ENCODE measurements at regions of chr1 and their contacts with region 1.

Region 1: DNA sequence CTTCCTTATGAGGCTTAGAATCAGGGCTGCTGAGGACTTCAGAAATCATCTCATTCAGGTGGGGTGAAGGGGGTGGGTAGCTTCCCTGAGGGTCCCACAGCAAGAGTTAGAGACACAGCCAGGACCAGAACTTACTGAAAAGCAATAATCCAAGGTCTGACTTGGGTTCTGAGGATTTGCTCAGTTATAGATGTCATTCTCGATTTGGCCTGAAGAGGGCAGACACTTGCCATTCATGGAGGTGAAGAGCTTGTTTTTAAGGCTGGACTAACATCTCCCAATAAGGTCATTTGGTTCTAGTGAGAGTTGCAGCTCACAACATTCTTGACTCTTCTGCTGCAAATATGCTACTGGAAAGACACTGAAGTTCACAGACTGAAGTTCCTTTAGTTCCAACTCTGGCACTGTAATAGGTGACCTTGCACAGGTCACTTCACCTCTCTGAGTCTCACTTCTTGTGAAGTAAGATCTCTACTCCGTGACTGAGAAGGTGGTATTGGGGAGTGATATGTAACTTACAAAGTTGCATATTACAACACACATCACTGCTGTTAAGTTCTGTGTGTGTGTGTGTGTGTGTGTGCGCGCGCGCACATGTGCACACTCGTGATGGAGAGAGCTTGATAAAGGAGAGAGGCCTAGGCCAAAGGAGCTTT is 69.8 kb upstream of the DIRAS3 start:
- DNase-seq: peak; percentile 74
- H3K4me3 ChIP-seq: no peak overlapping the region
- H3K27ac ChIP-seq: no peak overlapping the region
- H3K27me3 ChIP-seq: no peaks in the 10 kb centered on the region
- CTCF ChIP-seq: peak; percentile 85

Region 2: GRCh38 chr1:67766141-67766978 is 353.9 kb before region 1 on chr1:
- CTCF ChIA-PET with region 1: interaction called, 19 read pairs
- POLR2A ChIA-PET with region 1: no interaction called
- DNase-seq: peak; percentile 73
- H3K4me3 ChIP-seq: peak overlapping the region; percentile 37
- H3K27ac ChIP-seq: peak overlapping the region; percentile 87
- H3K27me3 ChIP-seq: no peaks in the 10 kb centered on the region
- CTCF ChIP-seq: peak; percentile 76

Region 3: DNA sequence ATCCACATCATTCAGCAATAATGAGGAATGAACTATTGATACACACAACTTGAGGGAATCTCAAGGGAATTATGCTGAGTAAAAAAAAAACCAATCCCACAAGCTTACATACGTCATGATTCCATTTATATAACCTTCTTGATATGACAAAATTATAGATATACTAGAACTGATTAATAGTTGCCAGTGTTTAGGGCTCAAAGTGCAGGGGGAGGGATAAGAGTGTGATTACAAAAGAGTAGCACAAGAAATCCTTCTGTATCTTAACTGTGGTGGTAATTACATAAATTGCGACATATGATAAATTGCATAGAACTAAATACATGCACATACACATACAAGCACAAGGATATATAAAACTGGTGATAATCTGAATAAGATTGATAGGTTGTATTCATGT is 83.3 kb before region 1 on chr1:
- CTCF ChIA-PET with region 1: no interaction called
- POLR2A ChIA-PET with region 1: no interaction called
- DNase-seq: no peak
- H3K4me3 ChIP-seq: no peak overlapping the region
- H3K27ac ChIP-seq: no peak overlapping the region
- H3K27me3 ChIP-seq: peaks cover 3% of the 10 kb centered on the region
- CTCF ChIP-seq: no peak

Region 4: DNA sequence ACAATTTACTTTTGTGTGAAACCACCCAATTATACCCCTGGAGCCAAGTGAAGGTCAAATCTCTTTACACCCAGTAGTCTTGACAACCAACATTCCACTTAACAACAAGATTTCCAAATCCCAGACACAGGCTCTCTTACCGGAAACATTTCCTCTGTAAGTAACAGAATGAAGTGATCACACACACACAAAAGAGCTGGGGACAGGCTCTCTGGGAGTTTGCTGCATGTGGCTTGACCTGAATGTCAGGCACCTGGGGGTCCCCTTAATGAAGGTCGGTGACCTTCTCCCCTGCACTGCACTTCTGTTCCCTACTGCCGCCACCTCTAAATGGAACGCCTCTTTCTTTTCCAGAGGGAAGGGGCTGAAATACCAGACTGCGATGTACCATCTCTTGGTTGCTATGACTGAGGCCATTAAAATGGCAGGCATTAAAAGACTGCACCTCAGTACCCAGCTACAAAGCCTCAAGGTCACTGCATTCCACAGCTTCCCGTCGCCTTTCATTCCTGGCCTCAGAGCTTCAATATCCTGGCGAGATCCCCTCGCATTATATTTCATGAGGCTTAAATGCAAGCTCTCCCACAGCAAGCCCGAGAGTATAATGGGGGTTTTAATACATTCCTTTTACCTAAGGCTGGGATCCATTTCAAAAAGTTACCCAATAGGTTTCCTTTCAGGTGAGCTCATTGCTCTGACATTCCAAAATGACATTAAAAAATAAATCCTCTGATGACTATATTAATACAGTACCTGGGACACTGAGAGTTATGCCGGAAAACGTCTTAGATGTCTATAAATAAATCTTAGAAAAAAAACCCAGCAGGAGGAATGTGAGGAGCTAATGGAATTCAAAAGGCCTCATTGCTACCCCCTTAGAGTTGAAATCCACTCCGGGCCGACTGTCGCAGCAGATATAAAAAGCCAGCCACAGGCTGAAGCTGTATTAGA is 21.1 kb after region 1 on chr1:
- CTCF ChIA-PET with region 1: interaction called, 19 read pairs
- POLR2A ChIA-PET with region 1: no interaction called
- DNase-seq: no peak
- H3K4me3 ChIP-seq: no peak overlapping the region
- H3K27ac ChIP-seq: peak overlapping the region; percentile 58
- H3K27me3 ChIP-seq: no peaks in the 10 kb centered on the region
- CTCF ChIP-seq: no peak

Region 5: DNA sequence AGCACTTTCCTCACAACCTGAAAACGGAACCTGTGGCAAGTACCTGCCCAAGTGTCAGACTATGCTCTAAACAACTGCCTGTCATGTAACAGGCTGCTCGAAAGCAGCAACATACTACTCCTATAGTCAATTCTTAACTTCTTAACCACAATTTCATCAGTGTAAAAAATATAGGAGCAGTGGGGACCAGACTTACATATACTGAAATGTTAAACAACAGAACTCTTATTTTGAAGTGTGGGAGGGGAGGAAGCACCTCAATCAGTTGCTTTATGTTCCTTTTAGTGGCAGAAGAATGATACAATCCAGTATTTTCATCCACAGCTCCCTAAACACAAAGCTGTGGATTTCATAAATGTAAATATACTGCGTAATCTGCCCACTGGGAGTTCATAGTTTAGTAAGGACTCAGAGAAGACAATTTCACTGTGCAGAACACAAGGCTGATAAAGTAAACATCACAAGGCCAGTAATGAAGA is 67.8 kb after region 1 on chr1:
- CTCF ChIA-PET with region 1: interaction called, 10 read pairs
- POLR2A ChIA-PET with region 1: no interaction called
- DNase-seq: peak; percentile 75
- H3K4me3 ChIP-seq: no peak overlapping the region
- H3K27ac ChIP-seq: peak overlapping the region; percentile 96
- H3K27me3 ChIP-seq: no peaks in the 10 kb centered on the region
- CTCF ChIP-seq: no peak

Region 6: DNA sequence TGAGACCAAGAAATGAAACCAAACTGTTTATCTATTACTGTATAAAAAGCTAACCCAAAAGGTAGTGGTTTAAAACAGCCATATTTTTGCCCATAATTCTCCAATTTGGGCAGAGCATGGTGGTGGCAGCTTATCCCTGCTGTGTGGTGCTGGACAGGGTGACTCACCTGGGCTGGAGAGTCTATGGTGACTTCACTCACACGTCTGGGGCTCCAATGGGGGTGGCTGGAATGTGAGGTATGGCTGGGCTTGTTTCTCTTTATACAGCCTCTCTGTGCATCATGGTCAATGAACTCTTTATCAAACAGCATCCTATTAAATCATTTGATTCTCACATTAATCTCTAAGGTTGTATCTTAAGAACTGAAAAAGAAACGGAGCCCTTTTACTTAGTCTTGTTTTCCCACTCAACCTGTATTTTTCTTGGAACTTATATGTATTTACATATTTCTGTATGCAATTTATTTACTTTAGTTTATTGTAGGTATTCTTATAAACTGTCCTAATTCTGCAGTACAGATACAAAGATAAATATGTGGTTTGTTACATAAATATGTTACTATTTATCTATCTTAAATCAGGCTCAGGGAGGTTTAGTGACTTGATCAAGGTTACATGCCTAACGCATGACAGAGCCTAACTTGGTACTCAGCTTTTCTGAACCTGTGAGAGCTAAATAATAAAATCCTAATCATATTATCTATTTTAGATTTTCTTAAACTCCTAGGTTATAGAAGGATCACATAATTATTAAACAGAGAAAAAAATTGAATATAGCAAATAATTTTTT is 149.6 kb after region 1 on chr1:
- CTCF ChIA-PET with region 1: interaction called, 16 read pairs
- POLR2A ChIA-PET with region 1: no interaction called
- DNase-seq: no peak
- H3K4me3 ChIP-seq: no peak overlapping the region
- H3K27ac ChIP-seq: no peak overlapping the region
- H3K27me3 ChIP-seq: no peaks in the 10 kb centered on the region
- CTCF ChIP-seq: no peak

Region 7: DNA sequence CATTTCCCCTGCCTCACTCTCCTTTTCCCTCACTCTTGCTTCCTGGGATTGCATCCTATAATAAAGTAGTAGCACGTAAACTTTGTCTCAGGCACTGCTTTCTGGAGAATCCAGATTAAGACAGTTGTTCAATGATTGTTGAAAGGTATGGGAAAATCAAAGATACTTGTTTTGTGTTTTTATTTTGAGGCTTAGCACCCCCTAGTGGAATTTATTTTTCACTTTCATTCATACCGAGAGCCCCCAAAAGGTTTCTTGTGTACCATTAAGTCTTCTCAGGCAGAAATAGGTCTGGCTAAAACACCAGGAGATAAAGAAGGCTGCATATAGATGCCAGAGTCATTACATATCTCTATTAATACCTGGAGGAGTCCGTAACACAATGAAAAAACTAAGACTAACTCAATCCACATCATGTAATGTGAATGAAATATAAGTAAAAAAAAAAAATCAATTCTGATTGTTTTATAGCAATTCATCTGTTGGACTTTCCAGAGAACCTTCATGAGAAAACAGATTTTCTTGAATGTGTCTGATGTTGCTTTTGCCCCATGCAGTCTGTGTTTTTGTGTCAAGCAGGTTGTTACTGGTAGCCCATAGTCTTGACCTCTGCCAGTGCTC is 226.0 kb after region 1 on chr1:
- CTCF ChIA-PET with region 1: interaction called, 473 read pairs
- POLR2A ChIA-PET with region 1: interaction called, 3 read pairs
- DNase-seq: no peak
- H3K4me3 ChIP-seq: no peak overlapping the region
- H3K27ac ChIP-seq: no peak overlapping the region
- H3K27me3 ChIP-seq: no peaks in the 10 kb centered on the region
- CTCF ChIP-seq: peak; percentile 57

Region 8: GRCh38 chr1:68384321-68384813 is 264.1 kb after region 1 on chr1:
- CTCF ChIA-PET with region 1: interaction called, 27 read pairs
- POLR2A ChIA-PET with region 1: no interaction called
- DNase-seq: peak; percentile 96
- H3K4me3 ChIP-seq: no peak overlapping the region
- H3K27ac ChIP-seq: peak overlapping the region; percentile 88
- H3K27me3 ChIP-seq: no peaks in the 10 kb centered on the region
- CTCF ChIP-seq: peak; percentile 67

Measured in AG04450 (cell line).